SK-N-SH (cell line): ENCODE measurements at regions of chr12 and their contacts with region 1.

Region 1: GRCh38 chr12:127108360-127109215 is 1158.4 kb upstream of the TMEM132C start:
- DNase-seq: peak; percentile 62
- H3K4me3 ChIP-seq: no peak overlapping the region
- H3K27ac ChIP-seq: no peak overlapping the region
- H3K4me1 ChIP-seq: no peaks in the 10 kb centered on the region
- H3K27me3 ChIP-seq: no peaks in the 10 kb centered on the region
- CTCF ChIP-seq: peak; percentile 50
- EP300 ChIP-seq: no peak
- RAD21 ChIP-seq: peak; percentile 73

Region 2: DNA sequence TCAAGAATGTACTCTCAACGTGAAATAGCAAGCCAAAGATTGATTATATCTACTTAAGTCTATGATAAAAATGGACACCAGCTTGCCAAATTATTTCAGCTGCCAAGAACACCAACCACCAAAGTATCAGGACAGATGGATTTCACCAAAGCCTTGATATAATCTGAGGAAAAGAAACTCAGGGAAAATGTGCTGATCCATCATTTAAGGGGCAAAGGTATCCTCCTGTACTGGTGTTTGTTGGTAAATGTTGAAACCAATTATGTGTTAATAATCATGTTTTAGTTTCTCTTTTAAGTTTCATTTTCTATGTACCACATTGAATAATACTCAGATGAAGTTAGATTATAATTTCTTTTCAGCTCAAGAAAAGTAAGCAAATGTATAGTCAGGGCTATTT is 125.9 kb before region 1 on chr12:
- CTCF ChIA-PET with region 1: no interaction called
- POLR2A ChIA-PET with region 1: no interaction called
- DNase-seq: no peak
- H3K4me3 ChIP-seq: no peak overlapping the region
- H3K27ac ChIP-seq: no peak overlapping the region
- H3K4me1 ChIP-seq: no peaks in the 10 kb centered on the region
- H3K27me3 ChIP-seq: no peaks in the 10 kb centered on the region
- CTCF ChIP-seq: no peak
- EP300 ChIP-seq: no peak
- RAD21 ChIP-seq: no peak

Region 3: DNA sequence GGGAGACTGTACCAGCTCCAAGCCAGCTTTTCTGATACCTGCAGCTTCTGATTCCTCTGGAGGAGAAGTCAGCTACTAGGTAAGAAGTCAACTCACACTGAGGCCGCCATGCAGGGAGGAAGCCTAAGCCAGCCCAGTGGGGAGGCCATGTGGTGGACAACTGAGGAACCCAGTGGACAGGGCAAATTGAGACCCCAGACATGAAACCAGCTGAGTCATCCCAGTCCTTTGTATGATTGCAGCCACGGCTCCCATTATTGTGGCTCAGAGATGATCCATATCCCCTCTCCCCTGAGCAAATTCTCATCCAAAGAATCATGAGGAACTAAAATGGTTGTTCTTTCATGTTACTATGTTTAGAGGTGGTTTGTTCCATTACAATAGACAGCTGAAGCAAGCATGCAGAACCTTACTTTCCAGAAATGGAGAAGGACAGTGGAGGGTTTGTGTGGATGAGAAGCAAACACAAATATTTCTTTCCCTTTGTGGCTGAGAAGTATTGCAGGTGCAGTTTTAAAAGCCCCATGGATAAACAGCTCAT is 11.1 kb after region 1 on chr12:
- CTCF ChIA-PET with region 1: interaction called, 26 read pairs
- POLR2A ChIA-PET with region 1: no interaction called
- DNase-seq: no peak
- H3K4me3 ChIP-seq: no peak overlapping the region
- H3K27ac ChIP-seq: no peak overlapping the region
- H3K4me1 ChIP-seq: peaks cover 0 to 3% of the 10 kb centered on the region in 2 experiments; a peak in 1 of 4 replicates
- H3K27me3 ChIP-seq: no peaks in the 10 kb centered on the region
- CTCF ChIP-seq: no peak
- EP300 ChIP-seq: no peak
- RAD21 ChIP-seq: no peak

Region 4: DNA sequence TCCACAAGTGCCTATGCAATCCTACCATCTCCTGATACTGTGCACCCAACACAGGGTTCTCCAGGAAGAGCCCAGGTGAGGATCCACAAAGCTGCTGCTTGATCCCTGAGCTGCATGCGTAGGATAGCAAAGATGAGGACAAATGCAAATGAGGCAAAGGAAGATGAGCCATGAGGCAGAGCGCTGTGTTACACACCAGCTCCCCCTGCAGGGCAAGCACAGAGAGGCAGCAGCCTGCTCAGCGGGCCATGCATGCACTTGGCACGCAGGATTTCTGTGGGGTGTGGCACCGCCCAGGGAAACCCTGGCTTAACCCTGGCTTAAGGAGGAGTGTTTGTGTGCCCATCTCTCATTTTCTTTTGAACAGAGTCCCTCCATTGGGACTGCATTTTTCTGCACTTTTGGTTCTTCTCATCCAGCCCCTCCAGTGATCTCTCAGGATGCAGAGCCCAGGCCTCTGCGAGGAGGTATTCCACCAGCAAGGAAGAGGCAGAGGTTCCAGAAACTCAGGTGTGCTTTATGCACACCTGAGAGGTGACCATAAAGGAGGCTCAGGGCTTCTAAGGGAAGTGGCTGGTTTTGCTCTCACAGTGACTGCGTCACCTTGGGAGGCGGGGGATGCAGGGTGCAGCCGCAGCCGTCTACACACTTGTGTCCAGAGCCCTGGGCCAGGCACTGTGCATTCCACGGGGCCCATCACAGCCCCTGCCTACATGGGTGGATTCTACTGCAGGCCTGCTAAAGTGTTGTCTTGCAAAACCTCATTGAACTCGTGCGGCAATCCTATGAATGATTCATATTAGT is 185.1 kb after region 1 on chr12:
- CTCF ChIA-PET with region 1: interaction called, 131 read pairs
- POLR2A ChIA-PET with region 1: no interaction called
- DNase-seq: peak; percentile 63
- H3K4me3 ChIP-seq: no peak overlapping the region
- H3K27ac ChIP-seq: no peak overlapping the region
- H3K4me1 ChIP-seq: no peaks in the 10 kb centered on the region
- H3K27me3 ChIP-seq: no peaks in the 10 kb centered on the region
- CTCF ChIP-seq: peak; percentile 40
- EP300 ChIP-seq: no peak
- RAD21 ChIP-seq: peak; percentile 83

Region 5: DNA sequence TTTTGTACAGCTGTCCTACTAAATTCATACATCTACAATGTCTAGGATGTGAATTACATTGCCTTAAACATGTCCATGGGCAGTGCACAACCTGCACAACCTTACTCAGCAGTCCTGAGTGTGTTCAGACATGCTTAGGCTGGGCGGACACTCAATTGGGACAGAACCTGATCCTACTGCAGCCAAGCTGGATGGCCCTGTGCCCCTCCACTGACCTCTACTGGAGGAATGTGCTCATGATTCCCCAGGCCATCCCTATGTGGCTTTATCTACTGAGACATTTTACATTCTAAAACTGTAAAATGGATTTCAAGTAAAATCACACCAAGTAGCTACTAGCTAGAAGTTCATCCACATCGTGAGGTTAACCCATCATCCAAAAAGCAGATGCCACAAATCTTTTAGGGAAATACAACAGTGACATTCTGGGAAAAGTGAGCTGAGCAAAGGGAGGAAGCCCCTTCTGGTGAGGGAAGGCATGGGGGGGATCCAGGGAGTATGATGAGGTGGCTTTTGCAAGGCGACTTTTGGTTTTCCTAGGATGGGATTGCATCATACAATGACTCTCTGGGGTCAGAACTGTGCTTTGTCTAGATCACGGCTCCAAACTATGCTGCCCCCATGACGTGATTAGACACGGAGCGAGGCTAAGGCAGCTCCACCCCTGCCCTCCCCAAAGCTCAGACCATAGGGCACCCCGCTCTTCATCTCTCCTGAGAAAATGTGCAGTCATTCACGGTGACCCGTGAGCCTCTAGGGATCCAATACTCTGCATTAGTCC is 246.7 kb after region 1 on chr12:
- CTCF ChIA-PET with region 1: interaction called, 16 read pairs
- POLR2A ChIA-PET with region 1: no interaction called
- DNase-seq: peak; percentile 32
- H3K4me3 ChIP-seq: no peak overlapping the region
- H3K27ac ChIP-seq: no peak overlapping the region
- H3K4me1 ChIP-seq: no peaks in the 10 kb centered on the region
- H3K27me3 ChIP-seq: no peaks in the 10 kb centered on the region
- CTCF ChIP-seq: 0 out of 2 replicates have a peak, but pooled peaks have one; percentile 26
- EP300 ChIP-seq: no peak
- RAD21 ChIP-seq: peak; percentile 28; the same call in 1 of the 2 replicates

Region 6: DNA sequence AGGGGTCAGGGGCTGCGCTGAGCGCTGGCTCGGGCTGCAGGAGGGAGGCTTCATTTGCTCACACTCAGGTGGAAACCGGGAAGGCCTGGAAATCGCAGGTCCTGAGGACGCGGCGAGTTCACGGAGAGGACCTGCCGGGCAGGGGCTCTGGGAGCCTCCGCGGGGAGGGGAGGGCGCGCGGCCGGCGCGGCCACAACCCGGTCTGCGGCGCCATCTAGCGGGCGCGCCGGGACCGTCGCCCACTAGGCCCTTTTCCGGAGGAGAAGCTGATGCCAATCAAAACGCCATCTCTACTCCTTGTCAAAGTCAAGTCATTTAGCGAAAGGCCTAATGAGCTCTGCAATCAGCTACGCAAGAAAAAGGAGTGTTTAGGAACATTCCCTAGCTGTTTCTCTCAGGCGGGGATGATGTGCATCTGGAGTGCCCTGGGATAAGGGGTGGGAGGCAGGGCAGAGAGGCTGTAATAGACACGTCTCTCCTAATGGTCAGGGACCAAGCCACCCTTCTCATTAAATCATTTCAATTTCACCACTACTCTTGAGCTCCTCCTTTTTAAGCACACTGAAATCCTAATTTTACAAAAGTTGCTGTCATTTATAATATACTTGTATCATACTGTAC is 272.6 kb after region 1 on chr12:
- CTCF ChIA-PET with region 1: interaction called, 55 read pairs
- POLR2A ChIA-PET with region 1: no interaction called
- DNase-seq: peak; percentile 88
- H3K4me3 ChIP-seq: peak overlapping the region; percentile 17 to 41; a peak in 3 of 4 replicates
- H3K27ac ChIP-seq: no peak overlapping the region
- H3K4me1 ChIP-seq: peaks cover 0 to 2% of the 10 kb centered on the region in 2 experiments; a peak in 1 of 4 replicates
- H3K27me3 ChIP-seq: no peaks in the 10 kb centered on the region
- CTCF ChIP-seq: peak; percentile 59
- EP300 ChIP-seq: no peak
- RAD21 ChIP-seq: peak; percentile 78